Adrenal gland (tissue), 19 donors: ENCODE measurements at regions of chr2 and their contacts with region 1.

Region 1: GRCh38 chr2:229800997-229801754 is 86.8 kb upstream of the DNER start:
- DNase-seq: peak; percentile 47 to 83 (median 73)
- H3K4me3 ChIP-seq: no peak overlapping the region
- H3K27ac ChIP-seq: no peak overlapping the region
- H3K4me1 ChIP-seq: peaks cover 16 to 44% of the 10 kb centered on the region in 2 donors
- H3K27me3 ChIP-seq: no peaks in the 10 kb centered on the region
- CTCF ChIP-seq: peak; percentile 58 to 80 (median 66)
- POLR2A ChIP-seq: no peak

Region 2: DNA sequence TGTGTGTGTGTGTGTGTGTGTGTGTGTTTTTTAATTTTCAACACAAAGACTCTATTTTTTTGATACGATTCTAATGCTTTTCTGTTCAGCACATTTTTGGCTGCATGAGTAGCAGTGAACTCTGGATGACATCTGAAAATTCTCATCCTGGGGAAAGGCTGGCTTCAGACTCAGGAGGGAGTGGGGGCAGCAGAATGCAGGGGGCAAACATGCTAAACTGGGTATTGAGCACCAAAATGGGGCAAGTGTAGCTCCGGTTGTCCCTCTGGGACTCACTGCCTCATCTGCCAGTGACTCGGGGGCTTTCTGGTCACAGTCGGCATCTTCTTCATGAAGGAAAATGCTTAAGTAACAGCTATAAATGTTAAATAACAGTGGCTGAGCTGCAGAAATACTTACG is 413.3 kb before region 1 on chr2:
- intact Hi-C with region 1: no loop called
- DNase-seq: no peak
- H3K4me3 ChIP-seq: no peak overlapping the region
- H3K27ac ChIP-seq: peak overlapping the region in 2 of 5 donors; percentile 34 to 63
- H3K4me1 ChIP-seq: peaks cover 15 to 22% of the 10 kb centered on the region in 2 donors
- H3K27me3 ChIP-seq: no peaks in the 10 kb centered on the region
- CTCF ChIP-seq: no peak
- POLR2A ChIP-seq: no peak

Region 3: GRCh38 chr2:229679393-229680125 is 121.6 kb before region 1 on chr2:
- intact Hi-C with region 1: no loop called
- DNase-seq: no peak
- H3K4me3 ChIP-seq: no peak overlapping the region
- H3K27ac ChIP-seq: no peak overlapping the region
- H3K4me1 ChIP-seq: peaks cover 5 to 9% of the 10 kb centered on the region in 2 donors
- H3K27me3 ChIP-seq: no peaks in the 10 kb centered on the region
- CTCF ChIP-seq: no peak
- POLR2A ChIP-seq: no peak

Region 4: GRCh38 chr2:229921892-229922445 is 120.8 kb after region 1 on chr2 and contains the start of gene TRIP12:
- intact Hi-C with region 1: loop called in 1 of 2 experiments (anchors 10 kb)
- DNase-seq: peak; percentile 93 to 98 (median 95)
- H3K4me3 ChIP-seq: peak within 1 kb of the TSS; percentile 69 to 90 (median 82)
- H3K27ac ChIP-seq: peak within 1 kb of the TSS; percentile 93 to 99 (median 97)
- H3K4me1 ChIP-seq: peaks cover 0 to 33% of the 10 kb centered on the region in 2 donors
- H3K27me3 ChIP-seq: no peaks in the 10 kb centered on the region
- CTCF ChIP-seq: peak in 1 of 6 experiments; percentile 16
- POLR2A ChIP-seq: peak; percentile 27 to 44
- total RNA-seq, gene TRIP12: 78.1 to 242 (median 188) TPM